ENCODE measurements at regions of chr4 and their contacts with region 1.

Region 1: GRCh38 chr4:76585897-76586360 is 150.9 kb downstream of the SHROOM3 start:
- DNase-seq: peak; percentile 83 to 86
- H3K4me3 ChIP-seq: peak overlapping the region; percentile 63
- H3K27ac ChIP-seq: peak overlapping the region; percentile 68
- H3K4me1 ChIP-seq: peaks cover 51% of the 10 kb centered on the region
- H3K27me3 ChIP-seq: no peaks in the 10 kb centered on the region
- CTCF ChIP-seq: no peak; the same call in 1 of the 2 replicates

Region 2: DNA sequence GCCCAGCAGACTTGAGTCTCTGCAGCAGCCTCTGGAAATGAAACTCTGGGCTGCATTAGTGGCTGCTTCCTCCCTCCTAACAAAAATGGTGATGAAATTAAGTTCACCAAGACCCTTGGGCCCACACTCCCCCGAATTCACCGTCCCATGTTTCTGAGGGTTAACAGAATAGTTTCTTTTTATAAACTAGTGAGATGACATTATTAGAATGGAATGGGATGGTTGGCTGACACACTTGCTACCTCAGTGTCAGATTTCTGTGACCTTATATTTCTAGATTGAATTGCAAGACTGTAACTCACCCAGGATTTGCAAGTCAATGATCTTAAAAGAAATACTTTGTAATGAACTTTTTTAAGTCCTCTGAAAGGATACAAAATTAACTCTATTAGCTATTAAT is 23.8 kb before region 1 on chr4:
- CTCF ChIA-PET with region 1: no interaction called
- POLR2A ChIA-PET with region 1: interaction called, 3 read pairs
- intact Hi-C with region 1: loop called (anchors 2 kb)
- DNase-seq: peak in 1 of 2 experiments; percentile 72
- H3K4me3 ChIP-seq: peak overlapping the region; percentile 13; the same call in 1 of the 2 replicates
- H3K27ac ChIP-seq: peak overlapping the region; percentile 97
- H3K4me1 ChIP-seq: peaks cover 32% of the 10 kb centered on the region
- H3K27me3 ChIP-seq: no peaks in the 10 kb centered on the region
- CTCF ChIP-seq: no peak

Region 3: DNA sequence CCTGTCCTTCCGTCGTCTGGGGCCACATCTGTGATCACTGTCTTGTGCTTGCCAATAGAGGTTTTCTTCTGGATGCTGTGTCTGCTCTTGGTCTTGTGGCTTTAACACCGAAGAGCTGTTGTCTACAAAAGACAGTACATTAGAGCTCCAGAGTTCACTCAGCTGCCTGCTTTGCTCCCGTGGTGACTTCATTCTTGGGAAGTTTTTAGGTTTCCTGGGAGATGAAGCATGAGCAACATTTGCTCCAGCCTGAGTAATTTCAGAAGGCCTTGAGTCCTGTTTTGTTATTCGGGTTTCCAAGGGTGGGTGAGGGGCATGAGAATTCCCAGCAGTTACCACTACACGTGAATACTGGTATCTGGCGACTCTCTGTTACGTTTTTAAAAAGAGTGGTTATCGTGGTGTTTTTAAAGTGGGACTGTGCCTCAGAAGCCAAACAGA is 38.3 kb after region 1 on chr4:
- CTCF ChIA-PET with region 1: no interaction called
- POLR2A ChIA-PET with region 1: interaction called, 7 read pairs
- intact Hi-C with region 1: loop called (anchors 1 kb)
- DNase-seq: peak in 1 of 2 experiments; percentile 48
- H3K4me3 ChIP-seq: no peak overlapping the region
- H3K27ac ChIP-seq: no peak overlapping the region
- H3K4me1 ChIP-seq: peaks cover 45% of the 10 kb centered on the region
- H3K27me3 ChIP-seq: no peaks in the 10 kb centered on the region
- CTCF ChIP-seq: no peak

Region 4: GRCh38 chr4:76665139-76665538 is 79.2 kb after region 1 on chr4:
- CTCF ChIA-PET with region 1: no interaction called
- POLR2A ChIA-PET with region 1: no interaction called
- intact Hi-C with region 1: loop called (anchors 2 kb)
- DNase-seq: peak; percentile 81 to 92
- H3K4me3 ChIP-seq: no peak overlapping the region
- H3K27ac ChIP-seq: peak overlapping the region; percentile 80
- H3K4me1 ChIP-seq: peaks cover 29% of the 10 kb centered on the region
- H3K27me3 ChIP-seq: no peaks in the 10 kb centered on the region
- CTCF ChIP-seq: no peak

Region 5: GRCh38 chr4:76733068-76733771 is 147.3 kb after region 1 on chr4:
- CTCF ChIA-PET with region 1: no interaction called
- POLR2A ChIA-PET with region 1: no interaction called
- intact Hi-C with region 1: loop called (anchors 1 kb)
- DNase-seq: peak; percentile 54 to 63
- H3K4me3 ChIP-seq: no peak overlapping the region
- H3K27ac ChIP-seq: no peak overlapping the region
- H3K4me1 ChIP-seq: peaks cover 3% of the 10 kb centered on the region; the same call in 1 of the 2 replicates
- H3K27me3 ChIP-seq: no peaks in the 10 kb centered on the region
- CTCF ChIP-seq: peak; percentile 72